ENCODE measurements at regions of chr1 and their contacts with region 1.

Region 1: GRCh38 chr1:59971464-59971911 is 44.9 kb upstream of the CYP2J2 start:
- DNase-seq: peak; percentile 71
- H3K4me3 Mint-ChIP-seq: no peak overlapping the region
- H3K27ac Mint-ChIP-seq: no peak overlapping the region
- H3K4me1 Mint-ChIP-seq: no peaks in the 10 kb centered on the region
- H3K27me3 Mint-ChIP-seq: peaks cover 55% of the 10 kb centered on the region
- CTCF ChIP-seq: peak; percentile 91

Region 2: DNA sequence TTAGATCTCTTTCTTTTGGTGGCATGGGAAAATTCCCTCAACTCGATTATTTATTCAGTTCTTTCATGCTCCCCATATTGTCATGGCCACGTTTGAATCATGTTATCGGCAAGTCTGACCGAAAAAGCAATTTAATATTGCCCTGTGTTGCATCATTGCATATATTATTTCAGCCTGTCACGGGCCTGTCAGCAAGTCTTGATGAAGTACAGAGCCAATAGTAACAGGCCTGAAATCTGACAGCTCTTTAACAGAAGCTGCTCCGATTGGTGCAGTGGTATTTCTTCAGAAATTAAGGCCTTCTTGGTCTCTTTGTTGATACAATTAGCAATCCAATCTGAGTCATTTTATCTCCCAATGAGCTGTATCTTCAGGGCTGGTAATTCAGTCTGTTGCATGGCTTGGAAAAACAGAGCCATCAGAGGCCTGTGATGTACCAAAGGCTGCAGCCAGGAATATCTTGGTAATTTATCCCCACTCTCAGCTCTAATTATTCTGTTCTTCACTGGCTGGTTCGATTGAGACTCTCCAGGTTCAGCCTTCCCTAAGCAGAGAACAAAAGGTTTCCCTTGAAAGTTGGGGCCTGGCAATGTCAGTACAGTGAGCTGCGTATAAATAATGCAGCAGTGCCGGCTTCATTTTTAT is 525.1 kb before region 1 on chr1:
- CTCF ChIA-PET with region 1: no interaction called
- POLR2A ChIA-PET with region 1: no interaction called
- intact Hi-C with region 1: no loop called
- DNase-seq: peak; percentile 45
- H3K4me3 Mint-ChIP-seq: no peak overlapping the region
- H3K27ac Mint-ChIP-seq: peak overlapping the region; percentile 94
- H3K4me1 Mint-ChIP-seq: peaks cover 50% of the 10 kb centered on the region
- H3K27me3 Mint-ChIP-seq: no peaks in the 10 kb centered on the region
- CTCF ChIP-seq: no peak

Region 3: GRCh38 chr1:59947047-59947938 is 24.2 kb before region 1 on chr1:
- CTCF ChIA-PET with region 1: interaction called, 27 read pairs
- POLR2A ChIA-PET with region 1: no interaction called
- intact Hi-C with region 1: no loop called
- DNase-seq: peak; percentile 76
- H3K4me3 Mint-ChIP-seq: no peak overlapping the region
- H3K27ac Mint-ChIP-seq: no peak overlapping the region
- H3K4me1 Mint-ChIP-seq: no peaks in the 10 kb centered on the region
- H3K27me3 Mint-ChIP-seq: peaks cover 14% of the 10 kb centered on the region
- CTCF ChIP-seq: peak; percentile 83

Region 4: GRCh38 chr1:59994302-59995198 is 23.1 kb after region 1 on chr1:
- CTCF ChIA-PET with region 1: interaction called, 10 read pairs
- POLR2A ChIA-PET with region 1: no interaction called
- intact Hi-C with region 1: no loop called
- DNase-seq: no peak
- H3K4me3 Mint-ChIP-seq: no peak overlapping the region
- H3K27ac Mint-ChIP-seq: no peak overlapping the region
- H3K4me1 Mint-ChIP-seq: no peaks in the 10 kb centered on the region
- H3K27me3 Mint-ChIP-seq: peaks cover 60% of the 10 kb centered on the region
- CTCF ChIP-seq: no peak

Region 5: GRCh38 chr1:60281360-60281932 is 310.0 kb after region 1 on chr1:
- CTCF ChIA-PET with region 1: interaction called, 8 read pairs
- POLR2A ChIA-PET with region 1: no interaction called
- intact Hi-C with region 1: loop called (anchors 5 kb)
- DNase-seq: peak; percentile 85
- H3K4me3 Mint-ChIP-seq: no peak overlapping the region
- H3K27ac Mint-ChIP-seq: no peak overlapping the region
- H3K4me1 Mint-ChIP-seq: peaks cover 17% of the 10 kb centered on the region
- H3K27me3 Mint-ChIP-seq: no peaks in the 10 kb centered on the region
- CTCF ChIP-seq: peak; percentile 94

Region 6: DNA sequence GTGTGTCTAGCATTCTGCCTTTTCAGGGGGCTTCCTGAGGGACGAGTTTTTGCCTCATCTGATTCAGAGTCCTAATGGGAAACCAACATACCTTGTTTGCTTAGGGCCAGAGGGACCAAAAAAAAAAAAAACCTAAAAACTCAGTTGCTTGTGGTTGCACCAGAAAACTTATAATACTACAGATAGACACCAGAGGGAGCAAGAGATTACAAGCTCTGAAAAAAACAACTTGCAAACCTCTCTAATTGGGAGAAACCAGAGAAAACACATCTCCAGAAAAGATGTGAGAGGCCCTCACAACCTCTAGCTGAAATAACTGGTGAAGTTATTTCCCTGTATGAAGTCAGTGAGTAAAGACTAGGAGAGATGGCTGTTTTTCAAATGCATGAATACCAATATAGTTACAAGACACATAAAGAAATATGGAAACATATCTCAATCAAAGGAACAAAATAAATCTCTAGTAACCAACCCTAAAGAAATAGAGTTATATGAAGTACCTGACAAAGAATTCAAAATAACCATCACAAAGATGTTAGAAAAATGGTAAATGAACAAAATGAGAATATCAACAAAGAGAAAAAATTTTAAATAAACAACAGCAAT is 877.2 kb after region 1 on chr1:
- CTCF ChIA-PET with region 1: interaction called, 4 read pairs
- POLR2A ChIA-PET with region 1: no interaction called
- intact Hi-C with region 1: loop called (anchors 10 kb)
- DNase-seq: peak; percentile 38
- H3K4me3 Mint-ChIP-seq: no peak overlapping the region
- H3K27ac Mint-ChIP-seq: no peak overlapping the region
- H3K4me1 Mint-ChIP-seq: peaks cover 13% of the 10 kb centered on the region
- H3K27me3 Mint-ChIP-seq: peaks cover 20% of the 10 kb centered on the region
- CTCF ChIP-seq: peak; percentile 71

Measured in MCF 10A (cell line).